ENCODE measurements at regions of chr16 and their contacts with region 1.

Region 1: GRCh38 chr16:17149904-17150483 is 320.8 kb downstream of the XYLT1 start:
- DNase-seq: no peak
- ATAC-seq: no peak
- H3K4me3 ChIP-seq: no peak overlapping the region
- H3K27ac ChIP-seq: no peak overlapping the region
- H3K4me1 ChIP-seq: peaks cover 0 to 7% (median 0%) of the 10 kb centered on the region in 12 donors
- H3K27me3 ChIP-seq: no peaks in the 10 kb centered on the region
- CTCF ChIP-seq: no peak
- POLR2A ChIP-seq: no peak

Region 2: GRCh38 chr16:17053536-17054160 is 96.3 kb before region 1 on chr16:
- intact Hi-C with region 1: no loop called
- DNase-seq: no peak
- ATAC-seq: no peak
- H3K4me3 ChIP-seq: no peak overlapping the region
- H3K27ac ChIP-seq: no peak overlapping the region
- H3K4me1 ChIP-seq: no peaks in the 10 kb centered on the region
- H3K27me3 ChIP-seq: peaks cover 0 to 3% (median 0%) of the 10 kb centered on the region in 9 donors
- CTCF ChIP-seq: no peak
- POLR2A ChIP-seq: no peak

Region 3: GRCh38 chr16:17070882-17071592 is 79.0 kb before region 1 on chr16:
- intact Hi-C with region 1: no loop called
- DNase-seq: peak in 1 of 5 donors; percentile 15
- ATAC-seq: no peak
- H3K4me3 ChIP-seq: no peak overlapping the region
- H3K27ac ChIP-seq: no peak overlapping the region
- H3K4me1 ChIP-seq: peaks cover 0 to 8% (median 0%) of the 10 kb centered on the region in 12 donors
- H3K27me3 ChIP-seq: peaks cover 0 to 8% (median 0%) of the 10 kb centered on the region in 9 donors
- CTCF ChIP-seq: no peak
- POLR2A ChIP-seq: no peak

Region 4: GRCh38 chr16:17211797-17212196 is 61.8 kb after region 1 on chr16:
- intact Hi-C with region 1: loop called in 1 of 10 experiments (anchors 10 kb)
- DNase-seq: no peak
- ATAC-seq: no peak
- H3K4me3 ChIP-seq: no peak overlapping the region
- H3K27ac ChIP-seq: no peak overlapping the region
- H3K4me1 ChIP-seq: no peaks in the 10 kb centered on the region
- H3K27me3 ChIP-seq: no peaks in the 10 kb centered on the region
- CTCF ChIP-seq: peak in 5 of 12 donors; percentile 7 to 20 (median 11)
- POLR2A ChIP-seq: no peak

Region 5: GRCh38 chr16:17251496-17251895 is 101.5 kb after region 1 on chr16:
- intact Hi-C with region 1: no loop called
- DNase-seq: no peak
- ATAC-seq: no peak
- H3K4me3 ChIP-seq: no peak overlapping the region
- H3K27ac ChIP-seq: no peak overlapping the region
- H3K4me1 ChIP-seq: no peaks in the 10 kb centered on the region
- H3K27me3 ChIP-seq: no peaks in the 10 kb centered on the region
- CTCF ChIP-seq: no peak
- POLR2A ChIP-seq: no peak

Measured in heart left ventricle (tissue), 16 donors.